ENCODE measurements at regions of chr17 and their contacts with region 1.

Region 1: GRCh38 chr17:57833179-57833939 is 16.5 kb downstream of the MRPS23 start:
- DNase-seq: peak; percentile 62
- H3K4me3 ChIP-seq: peak overlapping the region in 3 of 4 donors; percentile 19 to 48 (median 31)
- H3K27ac ChIP-seq: peak overlapping the region; percentile 19 to 64 (median 51)
- H3K4me1 ChIP-seq: peaks cover 0 to 9% (median 9%) of the 10 kb centered on the region in 4 donors
- H3K27me3 ChIP-seq: no peaks in the 10 kb centered on the region
- CTCF ChIP-seq: peak; percentile 78 to 89 (median 82)
- EP300 ChIP-seq: no peak
- POLR2A ChIP-seq: no peak

Region 2: GRCh38 chr17:57121338-57122042 is 711.9 kb before region 1 on chr17:
- in situ Hi-C with region 1: loop called in 1 of 4 experiments (anchors 10 kb)
- intact Hi-C with region 1: no loop called
- DNase-seq: no peak
- H3K4me3 ChIP-seq: no peak overlapping the region
- H3K27ac ChIP-seq: no peak overlapping the region
- H3K4me1 ChIP-seq: no peaks in the 10 kb centered on the region
- H3K27me3 ChIP-seq: no peaks in the 10 kb centered on the region
- CTCF ChIP-seq: peak in 4 of 5 experiments; percentile 21 to 31 (median 30)
- EP300 ChIP-seq: no peak
- POLR2A ChIP-seq: no peak

Region 3: GRCh38 chr17:57130761-57131461 is 702.4 kb before region 1 on chr17:
- in situ Hi-C with region 1: loop called in 1 of 4 experiments (anchors 10 kb)
- intact Hi-C with region 1: loop called (anchors 10 kb)
- DNase-seq: peak; percentile 86
- H3K4me3 ChIP-seq: peak overlapping the region in 1 of 4 donors; percentile 3
- H3K27ac ChIP-seq: no peak overlapping the region
- H3K4me1 ChIP-seq: no peaks in the 10 kb centered on the region
- H3K27me3 ChIP-seq: no peaks in the 10 kb centered on the region
- CTCF ChIP-seq: peak; percentile 66 to 93 (median 90)
- EP300 ChIP-seq: no peak
- POLR2A ChIP-seq: no peak